ENCODE measurements at regions of chr2 and their contacts with region 1.

Region 1: GRCh38 chr2:167335541-167335992 is 447.3 kb downstream of the XIRP2 start:
- DNase-seq: peak; percentile 71
- ATAC-seq: no peak; the same call in 1 of the 2 replicates
- H3K4me3 ChIP-seq: no peak overlapping the region
- H3K27ac ChIP-seq: no peak overlapping the region
- H3K4me1 ChIP-seq: no peaks in the 10 kb centered on the region
- H3K27me3 ChIP-seq: no peaks in the 10 kb centered on the region
- CTCF ChIP-seq: no peak
- POLR2A ChIP-seq: no peak
- RAD21 ChIP-seq: no peak

Region 2: GRCh38 chr2:167181134-167181533 is 154.4 kb before region 1 on chr2:
- CTCF ChIA-PET with region 1: no interaction called
- POLR2A ChIA-PET with region 1: no interaction called
- dilution Hi-C with region 1: no loop called
- in situ Hi-C with region 1: no loop called
- intact Hi-C with region 1: no loop called
- DNase-seq: peak; percentile 79
- ATAC-seq: peak; percentile 84
- H3K4me3 ChIP-seq: no peak overlapping the region
- H3K27ac ChIP-seq: no peak overlapping the region
- H3K4me1 ChIP-seq: peaks cover 5% of the 10 kb centered on the region
- H3K27me3 ChIP-seq: no peaks in the 10 kb centered on the region
- CTCF ChIP-seq: no peak
- POLR2A ChIP-seq: no peak
- RAD21 ChIP-seq: no peak

Region 3: DNA sequence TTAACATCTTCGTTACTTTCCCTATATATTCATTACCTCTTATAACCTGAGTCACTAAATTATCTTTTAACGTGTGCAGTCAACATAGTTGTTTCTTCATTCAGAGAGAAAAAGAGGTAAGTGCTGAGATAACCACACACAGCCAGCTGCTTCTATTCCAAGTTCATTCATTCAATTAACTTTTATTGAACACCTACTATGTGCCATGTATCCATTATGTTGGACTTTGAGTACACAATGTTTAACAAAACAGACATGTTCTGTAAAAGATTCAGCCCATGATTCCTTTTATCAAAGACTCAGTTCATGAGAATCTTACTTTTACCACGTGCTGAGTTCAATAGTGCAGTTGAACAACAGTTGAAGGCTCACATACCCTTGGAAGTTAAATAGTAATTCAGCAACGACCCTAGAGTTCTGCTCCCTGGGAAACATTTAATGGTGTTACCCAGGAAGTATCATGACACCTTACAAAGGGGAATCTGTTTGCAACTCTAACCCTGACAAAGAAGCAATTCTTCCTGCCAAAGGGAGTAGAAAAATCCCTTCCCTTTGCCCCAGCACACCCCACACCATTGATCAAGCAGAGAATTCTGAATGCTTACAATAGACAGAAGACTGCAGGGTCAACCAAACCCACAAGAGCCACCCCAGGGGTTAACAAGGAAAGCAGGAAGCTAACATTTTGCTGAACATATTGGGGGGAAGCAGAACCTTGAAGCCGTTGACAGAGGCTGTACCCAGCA is 316.0 kb after region 1 on chr2:
- CTCF ChIA-PET with region 1: no interaction called
- POLR2A ChIA-PET with region 1: no interaction called
- dilution Hi-C with region 1: no loop called
- in situ Hi-C with region 1: no loop called
- intact Hi-C with region 1: loop called (anchors 5 kb)
- DNase-seq: no peak
- ATAC-seq: no peak
- H3K4me3 ChIP-seq: no peak overlapping the region
- H3K27ac ChIP-seq: no peak overlapping the region
- H3K4me1 ChIP-seq: no peaks in the 10 kb centered on the region
- H3K27me3 ChIP-seq: no peaks in the 10 kb centered on the region
- CTCF ChIP-seq: no peak
- POLR2A ChIP-seq: no peak
- RAD21 ChIP-seq: no peak

Measured in IMR-90 (cell line).